Heart right ventricle (tissue), 16 donors: ENCODE measurements at regions of chrX and their contacts with region 1.

Region 1: DNA sequence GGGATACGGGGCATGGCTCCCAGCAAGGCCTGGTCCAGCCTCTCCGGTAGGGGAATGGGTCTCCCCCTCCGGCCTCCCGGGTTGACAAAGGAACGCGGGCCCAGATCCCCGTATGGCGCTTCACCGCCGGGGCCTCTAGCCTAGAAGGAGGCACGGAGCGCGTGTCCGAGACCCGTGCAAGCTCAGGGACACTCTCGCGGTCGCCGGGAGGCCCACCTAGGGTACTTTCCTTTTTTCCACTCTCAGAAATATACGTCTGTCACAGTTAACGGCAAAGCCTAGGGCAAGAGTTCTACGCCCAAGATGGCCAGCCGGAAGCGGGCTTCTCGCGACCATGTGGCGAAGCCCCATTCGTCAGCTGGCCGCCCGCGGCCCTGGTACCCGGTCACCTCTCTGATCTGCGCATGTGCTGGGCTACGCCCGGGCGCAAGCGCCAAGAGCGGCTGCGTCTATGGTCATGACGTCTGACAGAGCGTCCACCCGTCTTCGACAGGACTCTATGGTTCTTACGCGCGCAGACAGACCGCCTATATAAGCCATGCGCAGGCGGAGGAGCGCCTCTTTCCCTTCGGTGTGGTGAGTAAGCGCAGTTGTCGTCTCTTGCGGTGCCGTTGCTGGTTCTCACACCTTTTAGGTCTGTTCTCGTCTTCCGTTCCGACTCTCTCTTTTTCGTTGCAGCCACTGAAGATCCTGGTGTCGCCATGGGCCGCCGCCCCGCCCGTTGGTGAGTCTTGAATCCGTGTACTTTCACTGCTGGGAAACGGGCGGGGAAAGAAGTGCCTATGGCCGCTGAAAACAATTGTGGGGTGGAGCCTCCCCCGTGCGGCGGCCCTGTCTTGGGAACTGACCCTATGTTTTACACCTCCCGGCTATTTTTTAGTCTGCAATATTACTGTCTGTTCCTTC is at the start of gene RPL10:
- DNase-seq: peak; percentile 93
- ATAC-seq: peak; percentile 88 to 97 (median 94)
- H3K4me3 ChIP-seq: peak within 1 kb of the TSS; percentile 66 to 97 (median 78)
- H3K27ac ChIP-seq: peak within 1 kb of the TSS; percentile 94 to 99 (median 98)
- H3K4me1 ChIP-seq: peaks cover 0 to 23% (median 15%) of the 10 kb centered on the region in 9 donors
- H3K27me3 ChIP-seq: no peaks in the 10 kb centered on the region
- CTCF ChIP-seq: no peak
- total RNA-seq, gene RPL10: 1,543 to 2,503 (median 1,867) TPM

Region 2: DNA sequence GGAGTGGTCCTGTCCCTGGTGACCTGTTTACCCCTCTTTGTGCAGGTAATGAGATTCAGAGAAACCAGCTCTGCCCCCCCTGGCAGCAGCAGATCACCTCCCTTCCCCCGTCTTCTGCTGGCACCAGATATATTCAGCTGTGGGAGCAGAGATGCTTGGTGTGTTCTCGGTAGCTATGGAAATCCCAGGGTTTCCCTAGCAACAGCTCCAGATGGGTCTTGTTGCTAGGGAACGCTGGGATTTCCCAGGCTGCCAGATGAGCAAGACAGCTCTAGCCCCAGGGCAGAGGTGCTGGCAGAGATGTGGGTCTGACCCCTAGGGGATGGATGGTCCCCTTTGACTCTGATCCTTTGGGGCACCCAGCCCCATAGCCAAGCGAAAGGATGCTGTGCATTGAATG is 1587.7 kb before region 1 on chrX:
- intact Hi-C with region 1: loop called in 1 of 10 experiments (anchors 5 kb)
- DNase-seq: no peak
- ATAC-seq: no peak
- H3K4me3 ChIP-seq: no peak overlapping the region
- H3K27ac ChIP-seq: no peak overlapping the region
- H3K4me1 ChIP-seq: no peaks in the 10 kb centered on the region
- H3K27me3 ChIP-seq: peaks cover 0 to 49% (median 0%) of the 10 kb centered on the region in 7 donors
- CTCF ChIP-seq: no peak

Region 3: DNA sequence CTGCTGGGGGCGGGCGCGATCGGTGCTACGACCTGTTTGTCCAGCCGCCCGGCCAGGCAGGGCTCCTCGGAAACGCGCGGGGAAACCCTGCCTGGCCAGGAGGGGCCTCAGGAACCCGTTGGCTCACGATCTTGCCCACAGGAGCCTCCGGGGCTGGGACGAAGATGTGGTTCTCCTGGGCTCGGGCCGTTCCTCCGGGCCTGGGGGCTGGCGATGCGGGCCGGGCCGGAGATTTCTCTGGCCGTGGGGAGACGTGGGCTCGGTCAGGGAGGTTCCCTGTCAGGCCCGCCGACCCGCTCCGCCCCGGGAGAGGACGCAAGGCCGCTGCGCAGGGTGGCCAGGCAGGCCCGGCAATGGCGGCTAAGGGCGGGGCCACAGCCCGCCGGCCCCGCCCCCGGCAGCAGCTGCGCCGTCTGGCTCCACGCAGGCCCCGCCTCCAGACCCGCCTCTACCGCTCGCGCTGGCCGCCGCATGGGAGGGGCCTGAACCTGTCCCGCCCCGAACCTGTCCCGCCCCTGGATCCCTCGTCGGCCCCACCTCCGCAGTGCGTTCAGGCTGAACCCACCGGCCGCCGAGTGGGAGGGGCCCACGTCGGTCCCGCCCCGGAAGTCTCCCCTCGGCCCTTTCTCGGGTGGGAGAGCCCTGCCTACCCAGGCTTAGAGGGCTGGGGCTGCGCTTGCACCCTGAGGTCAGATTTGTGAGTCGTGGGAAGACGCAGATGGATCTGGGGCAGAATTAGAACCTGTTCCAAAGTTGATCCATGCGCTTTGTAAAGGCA is 118.0 kb after region 1 on chrX and contains the start of gene FAM3A:
- intact Hi-C with region 1: loop called in 1 of 10 experiments (anchors 10 kb)
- DNase-seq: peak; percentile 93 to 95
- ATAC-seq: peak; percentile 95 to 98 (median 97)
- H3K4me3 ChIP-seq: peak within 1 kb of the TSS; percentile 47 to 82 (median 72)
- H3K27ac ChIP-seq: peak within 1 kb of the TSS; percentile 84 to 99 (median 94)
- H3K4me1 ChIP-seq: peaks cover 0 to 27% (median 13%) of the 10 kb centered on the region in 9 donors
- H3K27me3 ChIP-seq: peaks cover 0 to 5% (median 0%) of the 10 kb centered on the region in 7 donors
- CTCF ChIP-seq: no peak
- total RNA-seq, gene FAM3A: 36.5 to 73.9 (median 48.4) TPM

Region 4: DNA sequence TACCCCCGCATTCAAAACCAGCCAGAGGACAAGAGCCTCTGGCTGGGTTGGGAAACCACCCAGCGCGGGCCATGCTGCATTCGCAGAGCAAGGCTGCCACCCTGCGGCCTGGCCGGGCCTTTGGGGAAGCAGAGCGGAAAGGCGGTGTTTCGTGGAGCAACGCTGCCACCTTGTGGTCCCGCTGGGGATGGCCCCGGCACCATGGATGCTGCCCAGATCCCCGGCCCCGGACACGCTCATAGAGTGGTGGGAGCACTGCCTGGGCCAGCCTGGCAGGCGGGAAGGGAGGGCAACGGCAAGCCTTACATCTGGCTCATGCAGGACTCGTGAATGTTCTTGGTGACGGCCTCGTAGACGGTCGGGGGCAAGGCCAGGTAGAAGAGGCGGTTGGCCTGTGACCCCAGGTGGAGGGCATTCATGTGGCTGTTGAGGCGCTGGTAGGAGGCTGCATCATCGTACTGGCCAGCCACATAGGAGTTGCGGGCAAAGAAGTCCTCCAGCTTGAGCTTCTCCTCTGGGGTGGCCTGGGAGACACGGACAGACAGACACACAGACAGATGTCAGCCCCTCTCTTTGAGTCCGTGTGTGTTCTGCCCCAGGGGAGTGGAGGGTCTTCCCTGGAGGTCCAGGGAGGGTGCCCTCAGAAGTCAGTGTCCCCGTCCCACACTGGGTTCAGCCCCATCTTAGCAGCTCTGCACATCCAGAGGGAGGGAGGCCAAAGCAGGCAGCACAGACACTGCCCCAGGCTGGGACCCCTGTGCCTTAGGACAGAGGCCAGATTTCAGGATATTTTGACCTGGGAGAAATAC is 137.0 kb after region 1 on chrX:
- intact Hi-C with region 1: loop called in 1 of 10 experiments (anchors 5 kb)
- DNase-seq: peak; percentile 82 to 87
- ATAC-seq: peak; percentile 87 to 95 (median 92)
- H3K4me3 ChIP-seq: no peak overlapping the region
- H3K27ac ChIP-seq: peak overlapping the region in 6 of 10 donors; percentile 40 to 68 (median 60)
- H3K4me1 ChIP-seq: peaks cover 0 to 11% (median 6%) of the 10 kb centered on the region in 9 donors
- H3K27me3 ChIP-seq: no peaks in the 10 kb centered on the region
- CTCF ChIP-seq: peak; percentile 82 to 100 (median 95)

Region 5: DNA sequence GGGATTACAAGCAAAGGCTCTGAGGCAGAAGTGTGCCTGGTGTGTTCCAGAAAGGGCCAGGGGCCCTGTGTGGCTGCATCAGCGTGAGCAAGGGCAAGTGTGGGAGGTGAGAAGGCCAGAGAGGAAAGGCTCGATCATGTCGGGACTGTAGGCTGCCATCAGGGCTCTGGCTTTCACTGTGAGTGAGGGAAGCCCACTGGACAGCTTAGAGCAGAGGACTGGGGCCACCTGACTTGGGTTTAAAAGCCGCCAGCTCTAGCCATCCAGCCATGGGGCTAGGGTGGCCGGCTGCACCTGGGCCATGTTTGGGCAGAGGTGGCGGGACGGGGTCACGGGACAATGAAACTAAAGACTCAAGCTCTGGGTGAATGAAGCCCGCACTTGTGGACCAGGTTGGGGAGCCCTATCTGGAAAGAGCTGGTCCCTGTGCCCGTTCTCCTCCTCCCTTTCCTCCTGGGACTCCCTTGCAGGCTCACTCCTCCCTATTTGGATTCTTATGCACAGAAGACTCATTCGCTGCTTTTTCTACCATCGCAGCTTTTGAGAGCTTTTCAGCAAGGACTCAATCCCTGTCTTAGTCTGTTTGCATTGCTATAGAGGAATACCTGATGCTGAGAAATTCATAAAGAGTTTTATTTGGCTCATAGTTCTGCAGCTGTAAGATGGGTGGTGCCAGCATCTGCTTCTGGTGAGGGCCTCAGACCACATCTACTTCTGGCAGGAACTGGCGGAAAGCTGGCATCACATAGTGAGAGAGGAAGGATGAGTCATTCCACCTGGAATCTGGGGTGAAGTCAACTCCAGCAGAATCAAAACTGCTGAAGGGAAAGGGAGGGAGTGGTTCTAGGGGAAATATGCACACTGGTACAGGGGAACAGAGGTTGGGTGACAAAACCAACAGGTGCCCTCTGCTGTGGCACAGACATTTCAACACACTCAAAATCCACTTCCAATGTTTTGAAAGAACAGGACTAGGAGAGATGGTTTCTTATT is 205.7 kb after region 1 on chrX:
- intact Hi-C with region 1: no loop called
- DNase-seq: no peak
- ATAC-seq: peak in 4 of 8 donors; percentile 45 to 83 (median 48)
- H3K4me3 ChIP-seq: no peak overlapping the region
- H3K27ac ChIP-seq: no peak overlapping the region
- H3K4me1 ChIP-seq: peaks cover 0 to 9% (median 0%) of the 10 kb centered on the region in 9 donors
- H3K27me3 ChIP-seq: no peaks in the 10 kb centered on the region
- CTCF ChIP-seq: no peak